PC-9 (cell line): ENCODE measurements at regions of chr16 and their contacts with region 1.

Region 1: GRCh38 chr16:1258906-1259759 is 3.3 kb downstream of the TPSD1 start:
- DNase-seq: peak in 1 of 2 experiments; percentile 45
- H3K4me3 ChIP-seq: peak overlapping the region; percentile 54; the same call in 1 of the 2 replicates
- H3K27ac ChIP-seq: no peak overlapping the region
- H3K4me1 ChIP-seq: no peaks in the 10 kb centered on the region; the same call in 1 of the 2 replicates
- H3K27me3 ChIP-seq: peaks cover 51% of the 10 kb centered on the region
- CTCF ChIP-seq: no peak

Region 2: GRCh38 chr16:1300664-1301476 is 41.7 kb after region 1 on chr16:
- CTCF ChIA-PET with region 1: no interaction called
- POLR2A ChIA-PET with region 1: no interaction called
- intact Hi-C with region 1: loop called (anchors 2 kb)
- DNase-seq: peak in 1 of 2 experiments; percentile 75
- H3K4me3 ChIP-seq: no peak overlapping the region
- H3K27ac ChIP-seq: no peak overlapping the region
- H3K4me1 ChIP-seq: peaks cover 56% of the 10 kb centered on the region
- H3K27me3 ChIP-seq: no peaks in the 10 kb centered on the region
- CTCF ChIP-seq: peak; percentile 71

Region 3: GRCh38 chr16:1366712-1367492 is 107.8 kb after region 1 on chr16:
- CTCF ChIA-PET with region 1: no interaction called
- POLR2A ChIA-PET with region 1: no interaction called
- intact Hi-C with region 1: no loop called
- DNase-seq: no peak
- H3K4me3 ChIP-seq: no peak overlapping the region
- H3K27ac ChIP-seq: no peak overlapping the region
- H3K4me1 ChIP-seq: no peaks in the 10 kb centered on the region
- H3K27me3 ChIP-seq: no peaks in the 10 kb centered on the region
- CTCF ChIP-seq: no peak